HCT116 (cell line): ENCODE measurements at regions of chr1 and their contacts with region 1.

Region 1: GRCh38 chr1:27772933-27773825 is at the start of gene STX12:
- DNase-seq: peak; percentile 97
- ATAC-seq: peak; percentile 98
- H3K4me3 ChIP-seq: peak within 1 kb of the TSS; percentile 65 to 66
- H3K27ac ChIP-seq: peak within 1 kb of the TSS; percentile 57
- H3K4me1 ChIP-seq: peaks cover 4 to 13% of the 10 kb centered on the region in 2 experiments; a peak in 3 of 4 replicates
- H3K27me3 ChIP-seq: no peaks in the 10 kb centered on the region
- CTCF ChIP-seq: no peak
- POLR2A ChIP-seq: peak; percentile 88
- RAD21 ChIP-seq: no peak
- total RNA-seq, gene STX12: 27.6 TPM

Region 2: GRCh38 chr1:27725374-27726173 is 47.6 kb before region 1 on chr1 and contains the start of gene FAM76A:
- CTCF ChIA-PET with region 1: interaction called, 6 read pairs
- POLR2A ChIA-PET with region 1: interaction called, 15 read pairs
- RAD21 ChIA-PET with region 1: no interaction called
- intact Hi-C with region 1: no loop called
- DNase-seq: peak; percentile 98
- ATAC-seq: peak; percentile 95
- H3K4me3 ChIP-seq: peak within 1 kb of the TSS; percentile 65 to 66
- H3K27ac ChIP-seq: peak within 1 kb of the TSS; percentile 76
- H3K4me1 ChIP-seq: peaks cover 10 to 17% of the 10 kb centered on the region in 2 experiments
- H3K27me3 ChIP-seq: no peaks in the 10 kb centered on the region
- CTCF ChIP-seq: 0 out of 6 replicates have a peak, but pooled peaks of 2 of the 3 experiments have one; percentile 14 to 31
- POLR2A ChIP-seq: no peak
- RAD21 ChIP-seq: no peak
- total RNA-seq, gene FAM76A: 9.6 TPM

Region 3: GRCh38 chr1:27785781-27786455 is 12.7 kb after region 1 on chr1:
- CTCF ChIA-PET with region 1: interaction called, 3 read pairs
- POLR2A ChIA-PET with region 1: interaction called, 17 read pairs
- RAD21 ChIA-PET with region 1: no interaction called
- intact Hi-C with region 1: no loop called
- DNase-seq: no peak
- ATAC-seq: peak; percentile 83
- H3K4me3 ChIP-seq: no peak overlapping the region
- H3K27ac ChIP-seq: no peak overlapping the region
- H3K4me1 ChIP-seq: peaks cover 2 to 13% of the 10 kb centered on the region in 2 experiments; a peak in 2 of 4 replicates
- H3K27me3 ChIP-seq: no peaks in the 10 kb centered on the region
- CTCF ChIP-seq: no peak
- POLR2A ChIP-seq: no peak
- RAD21 ChIP-seq: no peak

Region 4: GRCh38 chr1:27821761-27822315 is 48.7 kb after region 1 on chr1:
- CTCF ChIA-PET with region 1: no interaction called
- POLR2A ChIA-PET with region 1: no interaction called
- RAD21 ChIA-PET with region 1: no interaction called
- intact Hi-C with region 1: no loop called
- DNase-seq: no peak
- ATAC-seq: no peak
- H3K4me3 ChIP-seq: no peak overlapping the region
- H3K27ac ChIP-seq: no peak overlapping the region
- H3K4me1 ChIP-seq: peaks cover 5 to 10% of the 10 kb centered on the region in 2 experiments; a peak in 3 of 4 replicates
- H3K27me3 ChIP-seq: no peaks in the 10 kb centered on the region
- CTCF ChIP-seq: no peak
- POLR2A ChIP-seq: no peak
- RAD21 ChIP-seq: no peak